ENCODE measurements at regions of chr12 and their contacts with region 1.

Region 1: GRCh38 chr12:75553398-75553797 is 42.0 kb upstream of the KRR1 start:
- DNase-seq: no peak

Region 2: GRCh38 chr12:75705749-75706711 is 152.6 kb after region 1 on chr12:
- intact Hi-C with region 1: loop called (anchors 5 kb)
- DNase-seq: peak; percentile 80

Region 3: GRCh38 chr12:75944097-75944904 is 390.9 kb after region 1 on chr12:
- intact Hi-C with region 1: loop called (anchors 5 kb)
- DNase-seq: no peak

Measured in cardiac septum (tissue), 1 donor.